CD14-positive monocyte (primary cell): ENCODE measurements at regions of chr4 and their contacts with region 1.

Region 1: GRCh38 chr4:124334119-124334518 is 378.4 kb downstream of the ANKRD50 start:
- DNase-seq: peak in 1 of 3 donors; percentile 28
- H3K4me3 ChIP-seq: no peak overlapping the region
- H3K4me3 Mint-ChIP-seq: no peak overlapping the region
- H3K27ac ChIP-seq: no peak overlapping the region
- H3K27ac Mint-ChIP-seq: no peak overlapping the region
- H3K4me1 ChIP-seq: peaks cover 0 to 3% of the 10 kb centered on the region in 2 donors
- H3K4me1 Mint-ChIP-seq: peaks cover 4% of the 10 kb centered on the region
- H3K27me3 ChIP-seq: no peaks in the 10 kb centered on the region
- H3K27me3 Mint-ChIP-seq: no peaks in the 10 kb centered on the region
- CTCF ChIP-seq: peak; percentile 46

Region 2: GRCh38 chr4:125060376-125060775 is 726.3 kb after region 1 on chr4:
- intact Hi-C with region 1: no loop called
- DNase-seq: no peak
- H3K4me3 ChIP-seq: no peak overlapping the region
- H3K4me3 Mint-ChIP-seq: no peak overlapping the region
- H3K27ac ChIP-seq: no peak overlapping the region
- H3K27ac Mint-ChIP-seq: no peak overlapping the region
- H3K4me1 ChIP-seq: no peaks in the 10 kb centered on the region
- H3K4me1 Mint-ChIP-seq: no peaks in the 10 kb centered on the region
- H3K27me3 ChIP-seq: no peaks in the 10 kb centered on the region
- H3K27me3 Mint-ChIP-seq: no peaks in the 10 kb centered on the region
- CTCF ChIP-seq: no peak

Region 3: DNA sequence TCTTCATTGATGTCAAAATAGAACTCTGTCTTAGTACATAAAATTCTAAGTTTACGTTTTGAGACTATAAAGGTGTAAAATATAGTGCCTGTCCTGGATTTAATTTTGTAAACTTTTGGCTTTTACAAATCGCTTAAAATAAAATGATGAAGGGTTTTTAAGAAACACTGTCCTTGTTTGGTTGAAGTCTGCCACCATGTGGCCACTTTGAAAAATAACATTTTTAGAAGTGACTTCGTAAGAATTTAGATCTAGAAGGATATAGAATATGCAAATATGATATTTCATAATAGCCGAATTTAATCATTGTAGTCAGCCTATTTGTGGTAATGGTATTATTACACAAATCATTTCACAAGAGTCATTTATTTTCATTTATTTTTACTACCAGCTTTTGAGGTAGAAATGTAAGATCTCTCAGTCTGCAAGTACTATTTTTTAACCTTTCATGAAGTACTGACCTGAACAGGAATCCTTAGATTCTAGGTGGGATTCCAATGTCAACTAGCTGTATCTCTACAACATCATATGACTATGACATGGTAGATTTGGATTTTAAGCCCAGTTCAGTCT is 949.7 kb after region 1 on chr4:
- intact Hi-C with region 1: loop called in 1 of 2 experiments (anchors 5 kb)
- DNase-seq: peak in 2 of 3 donors; percentile 4 to 7
- H3K4me3 ChIP-seq: no peak overlapping the region
- H3K4me3 Mint-ChIP-seq: no peak overlapping the region
- H3K27ac ChIP-seq: no peak overlapping the region
- H3K27ac Mint-ChIP-seq: no peak overlapping the region
- H3K4me1 ChIP-seq: no peaks in the 10 kb centered on the region
- H3K4me1 Mint-ChIP-seq: peaks cover 6% of the 10 kb centered on the region
- H3K27me3 ChIP-seq: no peaks in the 10 kb centered on the region
- H3K27me3 Mint-ChIP-seq: peaks cover 0 to 3% (median 2%) of the 10 kb centered on the region in 3 donors
- CTCF ChIP-seq: peak; percentile 77